ENCODE measurements at regions of chr7 and their contacts with region 1.

Region 1: GRCh38 chr7:134547397-134548054 is 1.4 kb upstream of the AKR1B15 start:
- DNase-seq: peak; percentile 85

Region 2: DNA sequence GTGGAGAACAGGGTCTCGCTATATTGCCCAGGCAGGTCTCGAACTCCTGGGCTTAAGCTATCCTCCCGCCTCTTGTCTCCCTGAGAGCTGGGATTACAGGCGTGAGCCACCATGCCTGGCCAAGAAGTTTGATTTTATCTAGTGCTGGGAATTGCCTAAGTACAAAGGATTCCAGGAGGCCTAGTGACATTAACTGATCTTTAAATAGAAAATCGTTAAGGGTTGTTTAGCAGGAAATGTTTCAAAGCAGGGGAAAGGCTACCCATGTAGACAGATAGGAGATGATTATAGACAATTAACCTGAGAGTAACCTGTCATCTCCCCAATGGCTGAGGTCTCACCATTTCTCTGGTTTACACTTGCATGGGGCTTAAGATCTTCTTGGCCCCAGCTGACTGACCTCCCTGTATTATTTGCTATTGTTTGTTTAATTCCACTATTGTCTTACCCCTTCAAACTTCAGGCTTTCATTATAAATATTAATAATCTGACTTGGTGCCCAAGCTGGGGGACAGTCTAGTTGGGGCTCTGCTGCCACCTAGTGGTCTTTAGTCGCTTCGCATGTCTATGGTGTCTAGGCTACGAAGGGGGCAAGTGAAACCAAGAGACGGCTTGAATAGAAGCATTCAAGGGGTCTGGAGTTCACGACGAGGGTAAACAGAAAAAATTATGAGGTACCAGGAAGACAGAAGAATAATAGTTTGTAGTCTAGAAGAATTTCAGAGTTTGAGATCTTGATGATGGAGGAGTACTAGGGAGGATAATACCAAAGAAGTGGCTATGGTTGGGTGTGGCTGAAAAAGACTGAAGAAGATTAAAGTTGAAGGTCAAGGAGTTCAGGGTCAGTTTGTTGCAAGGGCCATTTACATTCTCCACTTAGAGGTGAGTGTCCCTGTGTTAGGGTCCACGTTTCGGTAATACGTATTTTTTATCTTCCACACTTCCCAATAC is 58.7 kb after region 1 on chr7:
- intact Hi-C with region 1: loop called (anchors 1 kb)
- DNase-seq: peak; percentile 78